ENCODE measurements at regions of chr19 and their contacts with region 1.

Region 1: GRCh38 chr19:7197760-7198696 is 96.2 kb downstream of the INSR start:
- DNase-seq: peak; percentile 91 to 94 (median 93)
- H3K4me3 ChIP-seq: peak overlapping the region; percentile 65 to 86
- H3K4me3 Mint-ChIP-seq: peak overlapping the region; percentile 85 to 99 (median 92)
- H3K27ac ChIP-seq: peak overlapping the region; percentile 61
- H3K27ac Mint-ChIP-seq: peak overlapping the region; percentile 96 to 100 (median 98)
- H3K4me1 ChIP-seq: peaks cover 21% of the 10 kb centered on the region
- H3K4me1 Mint-ChIP-seq: peaks cover 4 to 19% (median 12%) of the 10 kb centered on the region in 4 donors
- H3K27me3 ChIP-seq: peaks cover 6% of the 10 kb centered on the region
- H3K27me3 Mint-ChIP-seq: peaks cover 9 to 15% of the 10 kb centered on the region in 2 donors

Region 2: DNA sequence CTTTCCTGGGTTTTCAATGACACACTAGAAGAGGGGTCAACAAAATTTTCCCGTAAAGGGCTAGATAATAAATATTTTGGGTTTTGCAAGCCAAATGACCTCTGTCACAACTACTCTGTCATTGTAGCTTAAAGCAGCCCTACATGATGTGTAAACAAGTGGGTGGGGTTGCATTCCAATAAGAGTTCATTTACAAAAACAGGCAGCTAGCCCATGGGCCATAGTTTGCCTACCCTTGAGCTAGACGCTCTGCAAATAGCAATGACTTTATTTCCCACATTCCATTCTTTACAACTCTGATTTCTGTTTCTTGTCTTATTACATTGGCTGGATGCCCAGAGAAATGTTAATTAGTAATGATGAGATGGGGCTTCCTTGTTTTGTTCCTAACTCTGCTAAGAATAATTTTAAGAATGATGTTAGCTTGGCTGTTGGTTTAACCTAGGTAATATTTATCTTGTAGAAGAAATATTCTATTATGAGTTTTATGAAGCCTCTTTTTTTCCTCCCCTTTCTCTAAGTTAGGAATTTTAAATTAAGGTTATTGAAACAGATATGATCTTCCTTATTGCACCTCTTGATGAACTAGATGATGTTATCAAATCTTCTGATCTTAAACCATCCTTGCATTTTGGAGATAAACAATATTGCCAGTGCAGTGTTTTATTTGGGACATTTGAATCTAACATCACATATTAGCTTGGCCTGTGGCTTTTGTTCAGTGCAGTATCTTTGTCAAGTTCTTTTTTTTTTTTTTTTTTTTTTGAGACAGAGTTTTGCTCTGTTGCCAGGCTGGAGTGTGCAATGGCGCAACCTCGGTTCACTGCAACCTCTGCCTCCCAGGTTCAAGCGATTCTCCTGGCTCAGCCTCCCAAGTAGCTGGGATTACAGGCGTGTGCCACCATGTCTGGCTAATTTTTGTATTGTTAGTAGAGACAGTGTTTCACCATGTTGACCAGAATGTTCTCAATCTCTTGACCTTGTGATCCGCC is 52.2 kb before region 1 on chr19:
- CTCF ChIA-PET with region 1: interaction called, 4 read pairs
- POLR2A ChIA-PET with region 1: no interaction called
- intact Hi-C with region 1: loop called (anchors 5 kb)
- DNase-seq: no peak
- H3K4me3 ChIP-seq: no peak overlapping the region
- H3K4me3 Mint-ChIP-seq: no peak overlapping the region
- H3K27ac ChIP-seq: no peak overlapping the region
- H3K27ac Mint-ChIP-seq: peak overlapping the region in 1 of 7 donors; percentile 35
- H3K4me1 ChIP-seq: no peaks in the 10 kb centered on the region
- H3K4me1 Mint-ChIP-seq: peaks cover 0 to 2% (median 0%) of the 10 kb centered on the region in 4 donors
- H3K27me3 ChIP-seq: no peaks in the 10 kb centered on the region
- H3K27me3 Mint-ChIP-seq: peaks cover 0 to 1% of the 10 kb centered on the region in 2 donors

Region 3: DNA sequence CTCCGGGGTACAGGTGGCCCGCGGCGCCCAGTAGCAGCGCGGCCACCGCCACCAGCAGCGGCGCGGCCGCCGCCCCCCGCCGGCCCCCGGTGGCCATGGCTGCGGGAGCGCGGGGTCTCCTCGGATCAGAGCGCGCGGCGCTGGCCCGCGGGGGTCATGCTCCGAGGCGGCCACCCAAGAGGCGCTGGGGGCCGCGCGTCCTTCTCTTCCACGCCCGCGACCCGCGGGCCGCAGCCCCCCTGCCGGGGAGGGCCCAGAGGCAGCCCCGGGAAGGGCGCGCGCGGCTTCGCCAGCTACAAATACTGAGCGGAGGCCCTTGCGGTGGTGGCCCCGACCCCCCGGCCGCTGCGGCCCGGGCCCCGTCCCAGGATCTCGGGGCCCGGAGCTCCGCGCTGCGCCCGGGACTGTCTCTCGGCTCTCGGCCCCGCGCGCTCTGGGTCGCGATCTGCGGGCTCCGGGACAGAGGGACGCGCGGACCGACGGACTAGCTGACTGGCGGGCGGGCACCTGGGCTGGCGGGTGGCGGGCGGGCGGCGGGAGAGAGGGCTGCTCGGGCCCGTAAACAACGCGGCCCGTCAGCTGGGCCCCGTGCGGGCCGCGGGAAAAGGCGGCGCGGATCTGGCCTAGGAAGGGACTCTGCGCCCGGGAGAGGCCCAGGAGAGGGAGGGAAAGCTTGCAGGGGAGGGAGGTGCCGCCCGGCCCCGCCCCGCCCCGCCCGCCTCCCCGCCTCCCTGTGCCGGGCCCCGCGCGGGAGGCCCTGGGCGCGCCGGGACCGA is 96.0 kb after region 1 on chr19 and contains the start of gene INSR:
- CTCF ChIA-PET with region 1: no interaction called
- POLR2A ChIA-PET with region 1: interaction called, 3 read pairs
- intact Hi-C with region 1: loop called (anchors 1 kb)
- DNase-seq: peak in 4 of 5 donors; percentile 2 to 53 (median 6)
- H3K4me3 ChIP-seq: no peak within 1 kb of the TSS
- H3K4me3 Mint-ChIP-seq: peak within 1 kb of the TSS; percentile 57 to 82 (median 72)
- H3K27ac ChIP-seq: no peak within 1 kb of the TSS
- H3K27ac Mint-ChIP-seq: peak within 1 kb of the TSS in 1 of 7 donors; percentile 43
- H3K4me1 ChIP-seq: peaks cover 10% of the 10 kb centered on the region
- H3K4me1 Mint-ChIP-seq: peaks cover 2 to 15% (median 7%) of the 10 kb centered on the region in 4 donors
- H3K27me3 ChIP-seq: no peaks in the 10 kb centered on the region
- H3K27me3 Mint-ChIP-seq: peaks cover 18 to 32% of the 10 kb centered on the region in 2 donors
- total RNA-seq, gene INSR: 1.2 to 2.2 TPM

Region 4: DNA sequence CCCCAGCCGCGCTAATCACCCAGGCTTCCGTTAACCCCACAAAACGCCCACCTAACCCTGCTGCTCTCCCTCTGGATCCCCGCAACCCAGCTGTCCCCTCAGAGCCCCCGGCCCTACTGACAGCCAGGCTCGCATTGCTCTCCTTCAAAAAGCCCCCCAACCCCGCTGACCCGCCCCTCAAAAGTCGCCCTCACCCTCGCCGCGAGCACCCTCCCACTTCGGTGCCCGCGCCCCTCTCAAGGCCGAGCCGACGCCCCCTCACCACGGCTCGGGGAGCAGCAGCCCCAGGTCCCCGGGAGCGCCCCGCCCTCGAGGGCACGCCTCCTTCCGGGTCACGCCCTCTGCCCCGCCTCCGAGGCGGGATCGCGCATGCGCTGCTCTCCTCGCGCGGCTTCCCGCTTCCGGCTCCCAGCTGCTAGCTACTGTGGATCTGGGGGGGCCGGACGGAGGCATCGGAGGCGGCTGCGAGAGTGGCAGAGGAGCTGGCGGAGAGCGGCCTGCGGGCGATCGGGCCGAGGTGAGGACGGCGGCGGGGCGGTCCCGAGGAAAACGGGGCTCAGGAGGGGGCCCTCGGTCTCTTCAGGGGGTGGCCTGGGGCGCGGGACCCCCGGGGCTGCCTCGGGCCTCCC is 196.8 kb after region 1 on chr19:
- CTCF ChIA-PET with region 1: no interaction called
- POLR2A ChIA-PET with region 1: no interaction called
- intact Hi-C with region 1: loop called (anchors 5 kb)
- DNase-seq: peak; percentile 88 to 95 (median 90)
- H3K4me3 ChIP-seq: peak overlapping the region in 1 of 2 donors; percentile 57
- H3K4me3 Mint-ChIP-seq: peak overlapping the region; percentile 84 to 92 (median 87)
- H3K27ac ChIP-seq: peak overlapping the region; percentile 58
- H3K27ac Mint-ChIP-seq: peak overlapping the region; percentile 78 to 96 (median 93)
- H3K4me1 ChIP-seq: peaks cover 46% of the 10 kb centered on the region
- H3K4me1 Mint-ChIP-seq: peaks cover 26 to 56% (median 34%) of the 10 kb centered on the region in 4 donors
- H3K27me3 ChIP-seq: no peaks in the 10 kb centered on the region
- H3K27me3 Mint-ChIP-seq: no peaks in the 10 kb centered on the region

Region 5: GRCh38 chr19:8307965-8308866 is 1110.2 kb after region 1 on chr19 and contains the start of gene CD320:
- CTCF ChIA-PET with region 1: no interaction called
- POLR2A ChIA-PET with region 1: no interaction called
- intact Hi-C with region 1: loop called (anchors 10 kb)
- DNase-seq: peak; percentile 88 to 90 (median 89)
- H3K4me3 ChIP-seq: peak within 1 kb of the TSS; percentile 71 to 97
- H3K4me3 Mint-ChIP-seq: peak within 1 kb of the TSS; percentile 91 to 95 (median 92)
- H3K27ac ChIP-seq: peak within 1 kb of the TSS; percentile 74
- H3K27ac Mint-ChIP-seq: peak within 1 kb of the TSS; percentile 89 to 99 (median 96)
- H3K4me1 ChIP-seq: peaks cover 39% of the 10 kb centered on the region
- H3K4me1 Mint-ChIP-seq: peaks cover 12 to 43% (median 28%) of the 10 kb centered on the region in 4 donors
- H3K27me3 ChIP-seq: no peaks in the 10 kb centered on the region
- H3K27me3 Mint-ChIP-seq: no peaks in the 10 kb centered on the region
- total RNA-seq, gene CD320: 29.6 to 29.7 TPM

Measured in CD4-positive, alpha-beta memory T cell (primary cell).